ENCODE measurements at regions of chr5 and their contacts with region 1.

Region 1: GRCh38 chr5:43110606-43111442 is 9.9 kb upstream of the ZNF131 start:
- DNase-seq: peak; percentile 64
- H3K4me3 Mint-ChIP-seq: peak overlapping the region; percentile 20
- H3K27ac Mint-ChIP-seq: peak overlapping the region; percentile 35
- H3K4me1 Mint-ChIP-seq: peaks cover 40% of the 10 kb centered on the region
- H3K27me3 Mint-ChIP-seq: no peaks in the 10 kb centered on the region

Region 2: DNA sequence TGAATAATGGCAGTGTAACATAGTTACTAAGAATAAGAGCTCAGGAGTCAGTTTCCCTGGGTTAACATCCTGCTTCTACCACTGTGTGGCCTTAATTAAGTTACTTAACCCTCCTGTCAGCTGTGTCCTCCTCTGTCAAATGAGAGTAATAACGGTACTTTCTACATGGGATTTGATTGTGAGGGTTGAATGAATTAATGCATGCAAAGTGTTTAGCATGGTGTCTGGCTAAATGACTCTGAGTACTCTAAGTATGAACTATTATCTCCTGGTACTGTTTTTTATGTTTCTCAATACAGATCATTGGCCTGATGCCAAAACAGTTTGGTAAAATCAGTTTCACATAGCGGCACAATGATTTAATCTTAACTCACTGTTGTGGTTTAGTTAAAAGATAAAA is 29.5 kb after region 1 on chr5:
- CTCF ChIA-PET with region 1: interaction called, 8 read pairs
- POLR2A ChIA-PET with region 1: no interaction called
- intact Hi-C with region 1: loop called (anchors 1 kb)
- DNase-seq: no peak
- H3K4me3 Mint-ChIP-seq: no peak overlapping the region
- H3K27ac Mint-ChIP-seq: peak overlapping the region; percentile 34
- H3K4me1 Mint-ChIP-seq: peaks cover 41% of the 10 kb centered on the region
- H3K27me3 Mint-ChIP-seq: no peaks in the 10 kb centered on the region

Region 3: GRCh38 chr5:43729846-43730478 is 619.1 kb after region 1 on chr5:
- CTCF ChIA-PET with region 1: no interaction called
- POLR2A ChIA-PET with region 1: no interaction called
- intact Hi-C with region 1: no loop called
- DNase-seq: no peak
- H3K4me3 Mint-ChIP-seq: no peak overlapping the region
- H3K27ac Mint-ChIP-seq: no peak overlapping the region
- H3K4me1 Mint-ChIP-seq: no peaks in the 10 kb centered on the region
- H3K27me3 Mint-ChIP-seq: peaks cover 3% of the 10 kb centered on the region